Activated CD8-positive, alpha-beta T cell treated with anti-CD3 and anti-CD28 coated beads, Interleukin-2, amount 10 ng/mL, durations not matched to agents 7 days and 5 days (primary cell): ENCODE measurements at regions of chr17 and their contacts with region 1.

Region 1: GRCh38 chr17:82030470-82031302 is 792 bp upstream of the RAC3 start:
- DNase-seq: peak; percentile 88
- ATAC-seq: peak; percentile 73
- H3K4me3 Mint-ChIP-seq: peak overlapping the region; percentile 76
- H3K27ac Mint-ChIP-seq: peak overlapping the region; percentile 52
- H3K4me1 Mint-ChIP-seq: peaks cover 41% of the 10 kb centered on the region
- H3K27me3 Mint-ChIP-seq: no peaks in the 10 kb centered on the region

Region 2: GRCh38 chr17:81948635-81949378 is 81.9 kb before region 1 on chr17:
- CTCF ChIA-PET with region 1: no interaction called
- POLR2A ChIA-PET with region 1: no interaction called
- DNase-seq: no peak
- ATAC-seq: no peak
- H3K4me3 Mint-ChIP-seq: no peak overlapping the region
- H3K27ac Mint-ChIP-seq: no peak overlapping the region
- H3K4me1 Mint-ChIP-seq: peaks cover 3% of the 10 kb centered on the region
- H3K27me3 Mint-ChIP-seq: peaks cover 8% of the 10 kb centered on the region

Region 3: GRCh38 chr17:82051776-82052637 is 21.3 kb after region 1 on chr17 and contains the starts of genes GPS1 and RFNG:
- CTCF ChIA-PET with region 1: interaction called, 11 read pairs
- POLR2A ChIA-PET with region 1: no interaction called
- DNase-seq: peak; percentile 88
- ATAC-seq: peak; percentile 92
- H3K4me3 Mint-ChIP-seq: peak within 1 kb of the TSS; percentile 85
- H3K27ac Mint-ChIP-seq: peak within 1 kb of the TSS; percentile 83
- H3K4me1 Mint-ChIP-seq: peaks cover 24% of the 10 kb centered on the region
- H3K27me3 Mint-ChIP-seq: no peaks in the 10 kb centered on the region
- total RNA-seq, gene GPS1: 97.6 to 104 TPM
- total RNA-seq, gene RFNG: 19.4 to 20.8 TPM

Region 4: DNA sequence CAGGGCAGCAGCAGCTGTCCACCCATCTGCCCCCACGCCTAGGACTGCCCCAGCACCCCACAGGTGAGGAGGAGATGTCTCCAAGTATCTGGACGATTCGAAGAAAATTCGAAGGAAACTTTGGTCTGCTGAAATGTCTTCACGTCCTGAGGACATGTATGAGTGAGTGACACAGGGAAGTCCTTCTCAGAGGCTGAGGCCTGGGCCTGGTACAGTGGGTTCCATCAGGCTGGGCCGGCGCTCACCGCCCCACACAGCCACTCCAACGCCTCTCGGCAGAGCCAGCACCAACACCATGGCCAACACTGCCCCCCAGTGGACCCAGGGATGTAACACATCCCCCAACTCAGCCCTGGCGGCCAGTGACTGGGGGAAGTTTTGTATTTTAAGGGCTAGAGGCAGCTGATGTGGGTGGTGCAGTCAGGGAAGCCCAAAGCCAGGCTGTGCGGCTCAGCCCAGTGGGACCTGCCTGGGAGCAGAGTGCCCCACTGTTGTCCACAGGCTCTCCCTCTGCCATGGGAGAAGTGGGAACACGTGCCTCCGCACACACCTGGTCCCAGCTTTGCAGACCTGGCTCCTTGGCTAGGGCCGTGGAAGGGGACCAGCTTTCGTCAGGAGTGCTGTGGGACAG is 123.2 kb after region 1 on chr17:
- CTCF ChIA-PET with region 1: interaction called, 31 read pairs
- POLR2A ChIA-PET with region 1: no interaction called
- DNase-seq: peak; percentile 88
- ATAC-seq: peak; percentile 98
- H3K4me3 Mint-ChIP-seq: no peak overlapping the region
- H3K27ac Mint-ChIP-seq: peak overlapping the region; percentile 66
- H3K4me1 Mint-ChIP-seq: peaks cover 4% of the 10 kb centered on the region
- H3K27me3 Mint-ChIP-seq: no peaks in the 10 kb centered on the region

Region 5: DNA sequence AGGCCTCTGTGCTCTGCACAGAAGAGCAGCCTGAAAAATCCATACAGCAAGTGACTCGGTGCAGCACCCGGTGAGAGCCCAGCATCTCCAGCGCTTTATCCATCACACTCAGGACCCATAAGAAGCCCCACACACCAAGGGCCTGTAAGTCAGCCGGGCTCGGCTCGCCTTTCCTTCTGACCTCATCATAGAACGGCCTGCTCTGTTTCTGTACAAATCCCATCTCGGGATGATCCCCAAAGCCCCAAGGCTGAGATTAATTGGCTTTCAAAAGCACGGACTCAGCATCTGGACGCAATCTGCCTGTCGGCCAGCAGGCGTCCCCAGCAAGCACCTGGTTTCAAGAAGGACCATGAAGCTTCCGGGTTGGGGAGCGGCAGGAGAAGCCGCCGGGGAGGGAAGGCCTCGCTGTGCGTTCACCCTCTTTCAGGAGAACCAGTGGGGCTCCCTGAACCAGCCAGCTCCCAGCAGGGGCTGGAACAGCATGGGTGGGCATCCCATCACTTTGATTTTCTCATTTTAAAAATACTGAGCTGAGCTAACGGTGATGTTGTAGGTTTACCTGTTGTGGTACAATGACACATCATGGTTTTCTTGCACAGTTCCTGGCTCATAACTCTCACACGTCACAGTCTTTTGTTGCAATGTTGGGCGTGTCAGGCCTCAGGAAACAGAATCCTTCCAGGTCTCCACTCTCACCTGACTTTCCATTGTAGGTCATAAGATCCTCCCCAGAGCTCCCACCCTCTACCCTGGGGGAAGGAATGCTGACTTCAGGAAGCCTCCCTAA is 175.2 kb after region 1 on chr17:
- CTCF ChIA-PET with region 1: interaction called, 10 read pairs
- POLR2A ChIA-PET with region 1: no interaction called
- DNase-seq: peak; percentile 90
- ATAC-seq: peak; percentile 76
- H3K4me3 Mint-ChIP-seq: peak overlapping the region; percentile 62
- H3K27ac Mint-ChIP-seq: peak overlapping the region; percentile 96
- H3K4me1 Mint-ChIP-seq: peaks cover 67% of the 10 kb centered on the region
- H3K27me3 Mint-ChIP-seq: no peaks in the 10 kb centered on the region